GM13977 (cell line): ENCODE measurements at regions of chr16 and their contacts with region 1.

Region 1: DNA sequence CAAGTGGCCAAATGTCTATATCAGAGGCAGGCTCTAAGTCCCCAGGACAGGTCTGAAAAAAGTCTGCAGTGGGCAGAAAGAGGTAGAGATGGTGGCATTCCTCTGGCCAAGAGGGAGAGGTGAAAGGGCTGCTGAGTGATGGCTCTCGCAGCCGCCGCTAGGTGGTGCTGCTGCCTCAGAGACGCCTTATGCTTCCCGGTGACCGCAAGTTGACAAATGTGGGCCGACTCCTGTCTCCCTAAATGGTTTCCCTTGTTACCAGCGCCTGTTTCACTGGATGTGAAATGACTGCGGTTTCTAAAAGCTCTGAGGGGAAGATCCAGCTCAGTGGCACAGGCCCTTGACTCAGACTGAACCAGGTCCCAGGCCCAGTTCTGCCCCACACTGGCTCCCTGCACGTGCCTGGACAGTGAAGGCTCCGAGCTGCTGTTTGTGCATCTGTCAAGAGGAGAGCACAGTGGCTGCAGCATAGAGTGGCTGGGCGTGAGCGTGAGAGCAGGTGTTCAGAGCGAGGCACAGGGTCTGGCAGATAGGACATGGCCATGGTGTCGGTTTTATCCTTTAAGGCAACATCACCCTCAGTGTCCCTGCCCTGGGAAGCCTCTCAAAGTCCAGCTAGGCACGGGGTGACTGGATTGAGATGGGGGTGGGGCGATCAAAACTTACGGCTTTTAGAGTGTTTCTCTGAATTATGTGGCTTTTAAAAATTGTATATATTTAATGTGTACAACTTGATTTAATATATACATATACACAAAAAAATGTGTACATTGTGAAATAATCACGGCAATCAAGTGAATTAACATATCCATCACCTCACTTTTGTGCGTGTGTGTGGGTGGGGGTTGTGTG is 19.9 kb downstream of the CLEC16A start:
- DNase-seq: no peak
- CTCF ChIP-seq: peak; percentile 96

Region 2: DNA sequence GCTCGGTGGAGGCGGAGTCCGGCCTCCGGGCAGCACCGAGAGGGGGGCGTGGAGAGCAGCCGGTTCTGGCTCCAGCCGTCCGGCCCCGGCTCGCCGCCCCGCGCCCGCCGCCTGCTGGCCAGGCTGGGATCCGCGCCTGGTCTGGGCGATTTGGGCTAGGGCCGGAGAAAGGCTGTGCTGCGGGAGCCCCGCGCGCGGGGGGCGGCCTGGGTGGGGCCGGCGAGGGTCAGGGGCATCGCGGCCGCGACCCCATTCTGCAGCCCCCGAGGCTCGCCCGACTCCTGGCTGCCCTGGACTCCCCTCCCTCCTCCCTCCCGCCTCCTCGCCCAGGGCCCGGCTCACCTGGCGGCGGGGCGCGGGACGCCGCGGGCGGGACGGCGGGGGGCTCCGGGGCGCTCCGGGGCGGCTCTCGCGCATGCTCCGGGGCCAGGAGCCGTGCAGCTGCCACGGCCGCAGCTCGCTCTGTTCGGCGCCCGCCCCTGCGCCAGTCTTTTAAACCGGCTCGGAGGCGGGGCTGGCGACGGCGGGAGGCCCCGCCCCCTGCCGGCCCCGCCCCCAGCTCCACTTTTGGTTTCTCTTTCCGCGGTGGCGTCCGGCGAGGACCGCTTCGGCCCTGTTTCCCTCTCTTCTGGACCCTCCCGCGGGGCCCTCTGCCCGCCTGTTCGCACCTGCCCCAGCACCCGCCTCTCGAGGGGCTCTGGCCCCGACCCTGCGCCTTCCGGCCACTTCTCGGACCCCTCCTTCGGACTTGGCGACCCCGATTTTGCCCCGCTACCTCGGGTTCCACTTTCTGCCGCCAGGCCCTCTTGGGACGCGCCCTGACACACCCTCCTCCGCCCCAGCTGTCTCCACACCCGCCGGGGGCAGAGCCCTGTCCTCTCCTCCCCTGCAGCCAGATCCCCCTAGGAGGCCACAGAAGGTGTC is 291.7 kb after region 1 on chr16 and contains the start of gene SOCS1:
- in situ Hi-C with region 1: loop called (anchors 10 kb)
- DNase-seq: peak; percentile 95
- CTCF ChIP-seq: peak; percentile 91

Region 3: GRCh38 chr16:11379420-11379819 is 415.2 kb after region 1 on chr16:
- in situ Hi-C with region 1: loop called (anchors 10 kb)
- DNase-seq: peak; percentile 74
- CTCF ChIP-seq: no peak

Region 4: DNA sequence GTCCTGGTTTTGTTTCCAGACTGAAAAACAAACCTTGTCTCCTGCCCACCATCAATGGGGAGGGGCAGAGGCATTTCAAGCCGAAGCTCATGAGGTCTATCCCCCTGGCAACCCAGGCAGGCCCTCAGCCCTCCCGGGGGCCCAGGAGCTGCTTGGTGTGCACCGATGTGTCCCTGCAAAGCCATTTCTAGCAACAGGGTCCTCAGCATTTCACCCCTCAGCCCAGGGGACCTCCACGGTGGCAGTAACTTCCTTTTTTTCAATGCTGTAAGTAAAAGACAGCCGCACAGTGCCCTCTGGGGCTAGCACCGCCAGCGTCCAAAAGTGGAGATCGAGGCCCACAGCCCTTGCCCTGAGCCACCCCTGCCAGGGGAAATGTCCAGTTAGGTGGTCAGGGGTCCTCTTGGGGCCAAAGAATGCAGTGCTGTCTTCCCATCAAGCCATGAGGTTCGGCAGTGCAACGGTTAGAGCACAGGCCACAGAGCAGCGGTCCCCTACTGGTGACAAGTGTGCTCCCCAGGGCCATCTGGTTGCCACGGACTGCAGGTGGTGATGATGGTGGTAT is 542.6 kb after region 1 on chr16:
- in situ Hi-C with region 1: loop called (anchors 25 kb)
- DNase-seq: peak; percentile 49
- CTCF ChIP-seq: peak; percentile 5

Region 5: DNA sequence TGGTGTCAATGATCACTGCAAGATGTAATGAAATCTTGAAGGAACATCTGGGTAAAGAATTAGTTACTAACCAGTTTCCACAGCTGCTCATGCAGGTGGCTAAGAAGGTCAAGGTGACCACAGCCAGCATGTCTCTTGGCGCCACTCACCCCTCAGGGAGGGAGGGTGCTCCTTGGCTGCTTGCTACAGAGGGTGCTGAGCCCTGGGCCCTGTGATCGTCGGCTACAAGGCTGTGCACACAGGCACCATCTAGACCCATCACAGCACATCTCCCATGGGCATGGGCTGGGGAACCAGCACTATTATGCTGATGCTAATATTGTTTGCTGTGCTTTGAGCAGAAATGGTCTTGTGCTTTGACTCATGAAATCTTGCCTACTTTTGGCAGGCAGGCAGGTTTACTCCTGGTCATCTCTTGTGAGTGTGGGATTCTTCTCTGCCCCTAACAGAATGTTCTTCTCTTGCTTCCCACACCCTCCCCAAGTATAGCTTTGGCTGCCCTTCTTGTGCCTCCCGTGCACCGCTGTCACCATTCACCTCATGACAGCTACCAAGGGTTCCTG is 742.0 kb after region 1 on chr16:
- in situ Hi-C with region 1: loop called (anchors 25 kb)
- DNase-seq: peak; percentile 21
- CTCF ChIP-seq: no peak